Activated T-helper 1 cell treated with anti-CD3 and anti-CD28 coated beads, Interleukin-12 subunit alpha, Interleukin-12 subunit beta, Interleukin-2, Interleukin-4 antibody, amounts not matched to agents 30 ng/mL and 10 ng/mL and 1 ng/mL, durations not matched to agents 14 hours and 24 hours and 36 hours (primary cell): ENCODE measurements at regions of chr6 and their contacts with region 1.

Region 1: DNA sequence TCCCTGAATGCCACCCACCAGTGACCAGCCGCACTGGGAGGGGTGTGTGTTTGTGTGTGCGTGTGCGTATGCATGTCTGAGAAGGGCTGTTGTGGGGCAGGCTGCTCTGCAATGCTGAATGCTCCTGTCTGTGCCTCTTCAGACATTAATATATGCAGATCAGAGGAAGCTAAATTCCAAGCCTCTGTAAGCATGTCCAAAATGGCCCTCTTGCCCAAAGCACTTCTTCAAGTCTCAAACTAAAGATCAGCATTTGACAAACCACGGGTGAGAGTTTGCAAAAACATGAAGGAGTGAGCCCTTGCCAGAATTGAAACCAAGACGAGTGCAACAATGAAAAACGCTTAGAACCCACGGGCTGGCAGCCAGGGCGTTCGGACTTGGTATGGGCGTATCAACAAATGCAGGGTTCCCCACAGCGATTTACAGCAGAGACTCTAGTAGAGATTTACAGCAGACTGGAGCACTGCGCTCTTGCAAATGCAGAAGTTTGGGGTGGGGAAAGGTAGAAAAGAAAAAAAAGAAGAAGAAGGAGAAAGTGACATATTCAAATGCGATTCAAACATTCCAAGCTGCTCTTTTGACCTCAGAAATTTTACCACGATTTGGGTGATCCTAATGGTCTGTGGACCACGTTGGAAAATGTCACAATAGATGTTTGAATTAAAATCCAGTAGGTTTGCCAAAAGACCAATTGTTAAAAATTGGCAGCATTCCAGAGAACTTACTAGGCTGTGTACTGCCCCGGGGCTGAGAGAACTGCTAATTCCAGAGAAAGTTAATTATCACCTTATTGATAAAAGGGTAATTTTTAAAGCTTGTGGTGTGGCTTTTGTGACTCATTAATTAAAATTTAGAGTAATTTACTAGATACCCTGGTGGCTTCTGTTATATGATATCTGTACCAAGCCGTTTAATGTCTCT is 3.5 kb downstream of the SCML4 start:
- DNase-seq: peak; percentile 27
- H3K4me3 Mint-ChIP-seq: peak overlapping the region; percentile 83
- H3K27ac Mint-ChIP-seq: peak overlapping the region; percentile 97
- H3K4me1 Mint-ChIP-seq: peaks cover 88% of the 10 kb centered on the region
- H3K27me3 Mint-ChIP-seq: no peaks in the 10 kb centered on the region

Region 2: DNA sequence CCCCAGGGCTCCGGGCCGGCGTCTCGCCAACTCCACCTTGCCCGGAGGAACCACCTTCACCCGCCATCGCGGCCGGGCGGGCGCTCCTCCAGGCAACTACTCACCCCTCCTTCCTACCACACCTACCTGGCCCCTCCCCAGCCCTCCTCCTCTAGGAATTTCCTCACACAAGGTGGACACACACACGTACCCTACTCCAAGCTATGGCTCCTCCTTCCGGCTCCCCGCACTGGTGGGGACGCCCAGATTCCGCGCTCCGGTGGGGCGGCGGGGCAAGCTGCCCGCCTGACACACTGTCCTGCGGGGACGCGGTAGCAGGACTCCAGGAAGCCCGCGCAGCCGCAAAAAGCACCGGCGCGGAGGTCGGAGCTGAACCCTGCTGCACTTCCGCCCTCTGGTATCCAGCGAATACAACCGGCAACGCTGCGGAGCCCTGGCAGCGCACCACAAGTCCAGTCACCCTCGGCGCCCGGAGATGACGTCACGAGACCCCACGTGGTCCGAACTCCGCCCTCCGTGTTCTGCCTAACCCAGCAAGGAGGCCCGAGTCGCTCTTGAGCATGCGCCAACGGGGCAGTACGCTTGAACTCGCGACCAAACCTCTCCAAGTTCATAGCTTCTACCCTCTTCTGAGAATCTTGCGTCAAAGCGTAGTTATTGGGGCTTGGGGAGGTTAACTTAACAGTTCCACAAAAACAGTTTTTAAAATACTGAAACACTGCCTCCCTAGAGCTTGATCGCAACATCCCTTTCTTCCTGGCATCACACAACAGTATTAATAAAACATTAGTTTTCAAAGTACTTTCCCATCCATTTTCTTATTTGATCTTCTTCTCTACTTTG is 1495.0 kb before region 1 on chr6 and contains the start of gene ATG5:
- intact Hi-C with region 1: loop called (anchors 5 kb)
- DNase-seq: peak; percentile 100
- H3K4me3 Mint-ChIP-seq: peak within 1 kb of the TSS; percentile 100
- H3K27ac Mint-ChIP-seq: peak within 1 kb of the TSS; percentile 98
- H3K4me1 Mint-ChIP-seq: peaks cover 35% of the 10 kb centered on the region
- H3K27me3 Mint-ChIP-seq: peaks cover 22% of the 10 kb centered on the region
- total RNA-seq, gene ATG5: 36.0 and 36.7 TPM in 2 replicates

Region 3: DNA sequence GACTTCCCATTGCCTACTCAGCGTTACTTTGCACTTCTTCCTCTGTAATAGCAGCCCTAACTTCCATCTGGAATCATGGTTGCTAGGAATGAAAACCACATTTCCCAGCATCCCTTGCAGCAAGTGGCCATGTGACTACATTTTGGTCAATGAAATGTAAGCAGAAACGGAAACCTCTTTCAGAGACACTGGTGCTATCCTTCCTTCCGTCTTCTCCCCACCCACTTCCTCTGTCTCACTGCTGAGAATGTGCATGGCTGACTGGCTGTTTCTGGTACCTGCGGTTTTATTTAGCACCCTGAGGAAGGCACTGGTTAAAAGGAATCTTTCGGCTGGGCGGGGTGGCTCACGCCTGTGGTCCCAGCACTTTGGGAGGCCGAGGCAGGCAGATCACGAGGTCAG is 103.9 kb before region 1 on chr6:
- intact Hi-C with region 1: loop called (anchors 1 kb)
- DNase-seq: peak; percentile 70
- H3K4me3 Mint-ChIP-seq: peak overlapping the region; percentile 69
- H3K27ac Mint-ChIP-seq: peak overlapping the region; percentile 89
- H3K4me1 Mint-ChIP-seq: peaks cover 55% of the 10 kb centered on the region
- H3K27me3 Mint-ChIP-seq: peaks cover 3% of the 10 kb centered on the region

Region 4: DNA sequence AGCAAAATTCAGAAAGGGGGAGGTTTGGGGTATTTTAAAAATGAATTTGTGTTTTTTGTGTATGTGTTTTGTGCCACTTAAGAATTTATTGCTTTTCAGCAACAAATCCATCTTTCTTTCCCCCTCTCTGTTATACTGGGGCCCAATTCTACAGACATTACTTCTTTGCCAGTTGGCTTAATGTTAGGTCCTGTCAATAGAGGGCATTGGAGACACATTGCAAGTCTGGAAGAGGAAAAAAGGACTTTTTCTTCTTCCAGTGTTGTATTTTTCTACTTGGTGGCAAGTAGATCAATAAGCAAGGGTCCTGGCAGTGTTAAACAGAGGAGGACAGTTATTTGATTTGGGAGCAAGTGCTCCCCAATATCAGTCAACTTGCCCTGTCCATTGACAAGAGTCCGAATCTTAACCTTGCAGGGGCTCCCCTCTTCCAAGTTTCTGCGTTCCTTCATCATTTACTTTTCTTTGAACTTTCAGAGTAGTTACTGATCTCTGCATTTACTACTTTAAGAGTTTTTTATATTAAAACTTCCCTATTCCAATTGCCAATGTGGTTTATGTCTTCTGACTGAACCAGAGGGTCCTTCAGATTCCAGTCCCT is 19.9 kb before region 1 on chr6:
- intact Hi-C with region 1: loop called (anchors 2 kb)
- DNase-seq: no peak
- H3K4me3 Mint-ChIP-seq: no peak overlapping the region
- H3K27ac Mint-ChIP-seq: no peak overlapping the region
- H3K4me1 Mint-ChIP-seq: peaks cover 11% of the 10 kb centered on the region
- H3K27me3 Mint-ChIP-seq: peaks cover 13% of the 10 kb centered on the region

Region 5: GRCh38 chr6:108260809-108261569 is 440.4 kb after region 1 on chr6 and contains the start of gene SNX3:
- intact Hi-C with region 1: loop called (anchors 10 kb)
- DNase-seq: peak; percentile 88
- H3K4me3 Mint-ChIP-seq: peak within 1 kb of the TSS; percentile 90
- H3K27ac Mint-ChIP-seq: peak within 1 kb of the TSS; percentile 93
- H3K4me1 Mint-ChIP-seq: peaks cover 12% of the 10 kb centered on the region
- H3K27me3 Mint-ChIP-seq: peaks cover 6% of the 10 kb centered on the region
- total RNA-seq, gene SNX3: 68.5 and 72.5 TPM in 2 replicates

Region 6: GRCh38 chr6:108883172-108883571 is 1062.6 kb after region 1 on chr6:
- intact Hi-C with region 1: loop called (anchors 5 kb)
- DNase-seq: no peak
- H3K4me3 Mint-ChIP-seq: peak overlapping the region; percentile 56
- H3K27ac Mint-ChIP-seq: peak overlapping the region; percentile 93
- H3K4me1 Mint-ChIP-seq: peaks cover 58% of the 10 kb centered on the region
- H3K27me3 Mint-ChIP-seq: peaks cover 28% of the 10 kb centered on the region